MCF 10A (cell line): ENCODE measurements at regions of chr5 and their contacts with region 1.

Region 1: DNA sequence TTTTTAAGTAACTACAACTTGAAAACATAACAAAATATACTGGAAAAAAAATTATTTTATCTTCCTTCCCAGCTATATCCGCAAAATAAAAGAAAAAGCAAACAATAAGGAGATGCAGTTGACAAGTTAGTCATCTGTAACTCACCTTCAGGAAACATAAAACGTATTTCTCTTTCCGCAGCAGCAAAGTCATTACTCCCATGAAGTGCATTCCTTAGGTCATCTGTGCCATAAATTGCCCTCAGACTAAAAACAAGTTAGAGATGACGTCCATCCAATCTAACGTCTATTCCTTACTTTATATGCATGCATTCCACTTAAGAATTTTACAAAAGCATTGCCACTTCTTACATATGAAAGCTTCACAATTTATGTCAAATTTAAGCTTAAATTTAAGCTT is 10.9 kb downstream of the NME5 start:
- DNase-seq: no peak
- H3K4me3 Mint-ChIP-seq: no peak overlapping the region
- H3K27ac Mint-ChIP-seq: no peak overlapping the region
- H3K4me1 Mint-ChIP-seq: peaks cover under 1% of the 10 kb centered on the region
- H3K27me3 Mint-ChIP-seq: peaks cover 24% of the 10 kb centered on the region
- CTCF ChIP-seq: no peak

Region 2: GRCh38 chr5:137975208-137975607 is 153.1 kb before region 1 on chr5:
- CTCF ChIA-PET with region 1: no interaction called
- POLR2A ChIA-PET with region 1: no interaction called
- intact Hi-C with region 1: no loop called
- DNase-seq: no peak
- H3K4me3 Mint-ChIP-seq: no peak overlapping the region
- H3K27ac Mint-ChIP-seq: peak overlapping the region; percentile 49
- H3K4me1 Mint-ChIP-seq: no peaks in the 10 kb centered on the region
- H3K27me3 Mint-ChIP-seq: no peaks in the 10 kb centered on the region
- CTCF ChIP-seq: no peak

Region 3: DNA sequence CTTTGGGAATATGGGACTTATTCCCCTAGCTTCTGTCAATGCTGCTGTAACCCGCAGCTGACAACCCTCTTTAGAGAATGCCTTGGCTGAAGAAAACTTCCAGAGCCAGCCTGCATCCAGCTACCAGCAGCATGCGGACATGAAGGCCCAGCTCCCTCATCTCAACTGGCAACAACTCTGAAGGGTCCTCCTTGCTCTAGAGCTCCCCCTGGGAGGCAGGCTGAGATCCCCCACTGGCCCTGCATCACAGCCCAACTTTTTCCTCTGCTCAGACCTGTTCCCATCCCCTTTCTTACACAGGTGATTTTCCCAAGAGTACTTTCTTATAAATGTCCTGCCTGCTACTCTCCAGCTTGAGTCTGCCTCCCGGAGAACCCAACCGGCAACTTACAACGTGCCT is 63.2 kb before region 1 on chr5:
- CTCF ChIA-PET with region 1: interaction called, 17 read pairs
- POLR2A ChIA-PET with region 1: interaction called, 5 read pairs
- intact Hi-C with region 1: no loop called
- DNase-seq: no peak
- H3K4me3 Mint-ChIP-seq: no peak overlapping the region
- H3K27ac Mint-ChIP-seq: no peak overlapping the region
- H3K4me1 Mint-ChIP-seq: peaks cover 7% of the 10 kb centered on the region
- H3K27me3 Mint-ChIP-seq: no peaks in the 10 kb centered on the region
- CTCF ChIP-seq: peak; percentile 18

Region 4: GRCh38 chr5:138083702-138084101 is 44.6 kb before region 1 on chr5 and contains the start of gene WNT8A:
- CTCF ChIA-PET with region 1: interaction called, 199 read pairs
- POLR2A ChIA-PET with region 1: no interaction called
- intact Hi-C with region 1: no loop called
- DNase-seq: no peak
- H3K4me3 Mint-ChIP-seq: no peak within 1 kb of the TSS
- H3K27ac Mint-ChIP-seq: no peak within 1 kb of the TSS
- H3K4me1 Mint-ChIP-seq: no peaks in the 10 kb centered on the region
- H3K27me3 Mint-ChIP-seq: peaks cover 9% of the 10 kb centered on the region
- CTCF ChIP-seq: no peak
- total RNA-seq, gene WNT8A: not detected in 2 replicates

Region 5: GRCh38 chr5:138110266-138110963 is 17.9 kb before region 1 on chr5:
- CTCF ChIA-PET with region 1: interaction called, 15 read pairs
- POLR2A ChIA-PET with region 1: no interaction called
- intact Hi-C with region 1: no loop called
- DNase-seq: no peak
- H3K4me3 Mint-ChIP-seq: no peak overlapping the region
- H3K27ac Mint-ChIP-seq: no peak overlapping the region
- H3K4me1 Mint-ChIP-seq: peaks cover 5% of the 10 kb centered on the region
- H3K27me3 Mint-ChIP-seq: peaks cover 39% of the 10 kb centered on the region
- CTCF ChIP-seq: no peak

Region 6: DNA sequence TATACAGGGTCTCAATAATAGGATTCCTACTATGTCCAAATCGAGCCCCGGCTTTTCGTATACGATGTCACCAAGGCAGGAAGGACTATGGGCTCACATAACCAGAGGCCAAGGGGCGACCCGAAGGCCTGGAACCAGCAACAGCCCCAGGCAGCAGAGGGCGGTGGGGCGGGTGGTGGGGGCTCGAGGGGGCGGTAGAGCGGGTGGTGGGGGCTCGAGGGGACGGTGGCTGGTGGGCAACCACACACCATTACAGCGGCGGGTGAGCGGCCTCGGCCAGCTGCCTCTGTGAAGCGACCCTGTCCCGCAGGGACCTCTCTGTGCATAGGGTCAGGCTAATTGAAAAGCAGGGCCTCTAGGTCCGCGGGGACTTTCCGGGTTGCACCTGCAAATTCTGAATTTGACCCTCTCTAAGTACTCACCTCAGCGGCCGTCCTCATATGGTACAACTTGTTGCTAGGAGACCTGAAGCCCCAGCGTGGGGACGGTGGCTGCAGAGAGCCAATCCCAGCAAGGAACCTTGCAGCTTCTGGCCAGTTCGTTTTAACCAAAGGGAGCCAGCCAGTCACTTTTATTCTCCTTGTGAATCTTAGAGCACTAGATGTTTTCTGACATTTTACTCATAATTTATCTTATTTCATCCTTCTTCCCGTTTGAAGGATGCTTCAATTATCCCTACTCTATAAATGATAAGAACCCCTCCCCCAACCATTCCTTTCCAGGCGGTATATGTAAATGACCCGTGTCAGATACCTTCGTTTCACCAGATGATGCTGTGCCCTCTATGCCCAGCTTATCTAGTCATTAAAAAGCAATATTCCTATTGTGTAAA is 10.8 kb after region 1 on chr5 and contains the start of gene NME5:
- CTCF ChIA-PET with region 1: interaction called, 27 read pairs
- POLR2A ChIA-PET with region 1: no interaction called
- intact Hi-C with region 1: no loop called
- DNase-seq: no peak
- H3K4me3 Mint-ChIP-seq: peak within 1 kb of the TSS; percentile 21
- H3K27ac Mint-ChIP-seq: no peak within 1 kb of the TSS
- H3K4me1 Mint-ChIP-seq: no peaks in the 10 kb centered on the region
- H3K27me3 Mint-ChIP-seq: no peaks in the 10 kb centered on the region
- CTCF ChIP-seq: no peak
- total RNA-seq, gene NME5: 1.0 TPM in 1 of 2 replicates, not detected in the other